ENCODE measurements at regions of chr15 and their contacts with region 1.

Region 1: GRCh38 chr15:58070801-58071418 is 5.4 kb upstream of the ALDH1A2 start:
- DNase-seq: peak; percentile 63
- ATAC-seq: no peak
- H3K4me3 Mint-ChIP-seq: no peak overlapping the region
- H3K27ac Mint-ChIP-seq: no peak overlapping the region
- H3K4me1 Mint-ChIP-seq: peaks cover 3% of the 10 kb centered on the region
- H3K27me3 Mint-ChIP-seq: peaks cover 33% of the 10 kb centered on the region

Region 2: DNA sequence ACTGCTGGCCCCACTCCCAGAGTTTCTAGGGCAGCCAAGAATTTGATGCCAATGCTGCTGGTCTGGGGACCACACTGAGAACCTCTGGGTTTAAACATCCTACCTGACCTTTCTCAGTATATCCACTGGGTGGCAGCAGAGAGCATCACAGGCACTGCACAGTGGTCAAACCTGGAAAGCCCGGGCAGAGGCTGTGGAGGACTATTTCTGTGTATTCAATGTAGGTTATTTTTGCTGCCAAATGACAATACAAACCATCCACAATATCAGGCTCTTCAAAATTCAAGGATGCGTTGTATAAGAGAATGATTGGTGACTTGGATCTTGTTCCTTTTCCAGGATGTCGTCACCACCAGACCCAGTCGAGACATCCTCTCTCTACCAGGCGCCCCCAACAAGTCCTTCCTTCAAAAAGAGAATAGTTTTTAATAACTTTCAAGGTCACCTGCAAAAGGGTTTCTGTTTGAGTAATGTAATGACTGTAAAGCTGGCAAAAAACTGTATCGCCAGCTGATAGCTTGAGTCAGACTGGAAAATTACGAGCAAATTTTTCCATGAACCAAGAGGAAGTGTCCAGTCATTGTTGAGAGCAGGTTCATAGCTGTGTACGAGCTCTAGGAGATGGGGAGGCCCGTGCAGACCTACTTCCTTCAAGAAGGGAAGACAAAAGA is 509.7 kb before region 1 on chr15:
- CTCF ChIA-PET with region 1: interaction called, 17 read pairs
- POLR2A ChIA-PET with region 1: no interaction called
- DNase-seq: peak; percentile 74
- ATAC-seq: peak; percentile 84
- H3K4me3 Mint-ChIP-seq: no peak overlapping the region
- H3K27ac Mint-ChIP-seq: no peak overlapping the region
- H3K4me1 Mint-ChIP-seq: peaks cover 34% of the 10 kb centered on the region
- H3K27me3 Mint-ChIP-seq: peaks cover 13% of the 10 kb centered on the region

Region 3: DNA sequence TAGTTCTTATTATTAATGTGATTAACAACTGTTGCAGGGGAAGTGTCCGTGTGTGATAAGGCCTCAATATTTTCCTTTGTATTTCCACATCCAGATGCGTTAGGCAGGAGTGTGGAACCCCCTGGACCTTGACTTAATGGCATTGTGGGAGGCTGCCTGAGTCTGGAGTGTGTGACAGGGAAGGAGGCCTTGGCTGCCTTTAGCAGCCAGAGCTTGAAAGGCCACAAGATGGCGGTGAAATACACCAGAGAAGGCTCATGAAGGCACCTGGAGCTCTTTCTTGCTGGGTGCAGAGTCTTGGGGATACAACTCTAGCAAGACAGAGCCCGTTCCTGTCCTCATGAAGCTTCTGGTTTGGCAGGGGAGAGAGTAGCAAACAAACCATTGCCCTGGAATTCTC is 327.5 kb before region 1 on chr15:
- CTCF ChIA-PET with region 1: interaction called, 15 read pairs
- POLR2A ChIA-PET with region 1: no interaction called
- DNase-seq: no peak
- ATAC-seq: no peak
- H3K4me3 Mint-ChIP-seq: no peak overlapping the region
- H3K27ac Mint-ChIP-seq: no peak overlapping the region
- H3K4me1 Mint-ChIP-seq: peaks cover 8% of the 10 kb centered on the region
- H3K27me3 Mint-ChIP-seq: no peaks in the 10 kb centered on the region

Region 4: GRCh38 chr15:57866149-57866736 is 204.7 kb before region 1 on chr15:
- CTCF ChIA-PET with region 1: interaction called, 78 read pairs
- POLR2A ChIA-PET with region 1: interaction called, 3 read pairs
- DNase-seq: peak; percentile 76
- ATAC-seq: no peak
- H3K4me3 Mint-ChIP-seq: no peak overlapping the region
- H3K27ac Mint-ChIP-seq: no peak overlapping the region
- H3K4me1 Mint-ChIP-seq: peaks cover 14% of the 10 kb centered on the region
- H3K27me3 Mint-ChIP-seq: peaks cover 44% of the 10 kb centered on the region

Region 5: GRCh38 chr15:58087871-58088270 is 17.0 kb after region 1 on chr15:
- CTCF ChIA-PET with region 1: interaction called, 13 read pairs
- POLR2A ChIA-PET with region 1: no interaction called
- DNase-seq: no peak
- ATAC-seq: no peak
- H3K4me3 Mint-ChIP-seq: no peak overlapping the region
- H3K27ac Mint-ChIP-seq: no peak overlapping the region
- H3K4me1 Mint-ChIP-seq: no peaks in the 10 kb centered on the region
- H3K27me3 Mint-ChIP-seq: peaks cover 11% of the 10 kb centered on the region

Region 6: DNA sequence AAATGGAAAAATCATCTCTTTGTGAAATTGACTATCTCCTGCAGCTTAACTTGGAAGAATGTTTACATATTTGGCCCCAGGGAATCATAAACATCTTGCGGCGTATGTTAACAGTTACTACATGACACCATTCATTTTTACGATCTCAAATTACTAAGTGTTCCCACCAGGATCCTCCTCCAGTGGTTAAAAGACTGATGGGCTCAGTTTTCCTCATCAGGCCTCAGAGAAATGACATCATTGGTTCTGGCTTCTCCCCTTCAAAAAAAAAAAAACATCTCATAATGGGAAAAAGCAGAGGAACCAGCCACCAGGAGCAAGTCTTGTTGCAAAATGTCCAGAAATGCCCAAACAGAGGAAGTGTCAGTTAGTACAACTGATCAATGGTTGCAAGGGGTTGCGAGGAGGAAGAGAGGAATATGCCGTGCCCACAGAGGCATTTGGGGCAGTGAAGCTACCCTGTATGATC is 290.4 kb after region 1 on chr15:
- CTCF ChIA-PET with region 1: no interaction called
- POLR2A ChIA-PET with region 1: no interaction called
- DNase-seq: no peak
- ATAC-seq: no peak
- H3K4me3 Mint-ChIP-seq: no peak overlapping the region
- H3K27ac Mint-ChIP-seq: no peak overlapping the region
- H3K4me1 Mint-ChIP-seq: peaks cover 50% of the 10 kb centered on the region
- H3K27me3 Mint-ChIP-seq: peaks cover 10% of the 10 kb centered on the region